AG04449 (cell line): ENCODE measurements at regions of chr11 and their contacts with region 1.

Region 1: DNA sequence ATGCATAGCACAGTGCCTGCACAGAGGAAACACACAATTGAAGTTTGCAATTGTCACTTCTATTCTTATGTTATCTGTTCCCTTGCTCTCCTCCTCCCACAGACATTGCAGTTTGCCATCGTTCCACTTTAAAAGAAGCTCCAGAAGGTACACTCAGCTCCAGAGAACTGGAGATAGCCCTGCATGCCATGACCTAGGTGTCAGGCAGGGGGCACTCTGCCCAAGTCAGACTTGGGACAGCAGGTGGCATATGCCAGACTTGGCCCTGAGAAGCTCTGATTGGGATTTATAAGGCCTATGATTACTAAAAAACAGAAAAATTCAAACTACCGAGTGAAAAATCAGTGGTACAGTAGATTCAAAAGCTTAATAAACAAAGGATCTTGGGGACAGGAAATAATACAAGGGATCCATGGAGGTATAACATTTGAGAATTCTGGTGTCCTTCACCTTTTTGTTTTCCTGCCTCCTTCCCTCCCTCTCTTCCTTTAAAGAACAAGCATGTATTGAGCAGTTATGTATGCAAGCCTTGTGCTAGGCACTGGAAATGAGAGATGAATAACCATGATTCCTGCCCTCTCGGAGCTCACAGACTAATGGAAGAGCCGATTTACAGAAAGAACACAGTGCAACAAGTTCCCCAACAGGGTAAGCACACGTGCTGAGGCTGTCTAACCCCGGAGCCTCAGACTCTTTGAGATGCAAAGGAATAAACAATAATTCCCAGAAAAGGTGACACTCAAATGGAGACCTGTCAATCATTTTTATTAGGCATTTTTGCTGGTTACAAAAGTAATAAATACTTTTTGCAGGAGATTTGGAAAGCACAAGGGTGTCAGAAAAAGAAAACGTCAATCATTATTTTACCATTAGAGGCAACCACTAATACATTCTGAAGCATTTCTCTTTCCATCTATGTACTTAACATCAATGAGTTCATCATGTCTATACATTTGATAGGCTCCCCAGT is 39.8 kb downstream of the TENM4 start:
- DNase-seq: no peak
- H3K4me3 ChIP-seq: no peak overlapping the region
- CTCF ChIP-seq: peak; percentile 76

Region 2: DNA sequence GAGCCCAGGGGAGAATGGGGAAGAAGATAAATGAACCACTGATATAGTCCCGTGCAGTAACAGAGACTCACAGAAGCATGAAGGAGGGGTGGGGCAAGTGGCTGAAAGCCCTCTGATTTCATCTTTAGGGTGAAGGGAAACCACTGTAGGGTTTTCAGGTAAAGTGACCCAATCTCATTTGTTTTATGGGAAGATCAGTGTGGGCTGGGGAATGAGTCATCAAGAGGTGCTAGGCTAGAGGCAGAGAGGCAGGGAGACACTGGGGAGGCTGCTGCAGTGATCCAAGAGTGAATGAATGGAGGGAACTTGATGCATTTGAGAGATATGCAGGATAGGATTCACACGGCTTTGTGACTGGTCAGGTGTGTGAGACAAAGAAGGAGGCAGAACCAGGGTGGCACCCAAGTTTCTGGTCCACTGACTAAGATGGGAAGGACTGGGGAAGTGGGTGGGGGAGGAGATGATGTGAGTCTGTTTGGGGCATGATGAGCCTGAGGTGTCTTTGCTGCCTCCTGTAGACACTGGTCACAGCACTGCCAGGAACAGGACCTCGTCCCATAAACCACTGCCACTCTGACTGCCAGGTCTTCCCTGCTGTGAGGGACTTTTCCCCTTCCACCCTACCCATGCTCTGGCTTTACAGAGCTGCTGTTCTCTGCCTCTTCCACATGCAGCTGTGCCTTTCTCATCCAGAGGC is 199.2 kb before region 1 on chr11:
- CTCF ChIA-PET with region 1: no interaction called
- POLR2A ChIA-PET with region 1: no interaction called
- DNase-seq: no peak
- H3K4me3 ChIP-seq: no peak overlapping the region
- CTCF ChIP-seq: no peak

Region 3: DNA sequence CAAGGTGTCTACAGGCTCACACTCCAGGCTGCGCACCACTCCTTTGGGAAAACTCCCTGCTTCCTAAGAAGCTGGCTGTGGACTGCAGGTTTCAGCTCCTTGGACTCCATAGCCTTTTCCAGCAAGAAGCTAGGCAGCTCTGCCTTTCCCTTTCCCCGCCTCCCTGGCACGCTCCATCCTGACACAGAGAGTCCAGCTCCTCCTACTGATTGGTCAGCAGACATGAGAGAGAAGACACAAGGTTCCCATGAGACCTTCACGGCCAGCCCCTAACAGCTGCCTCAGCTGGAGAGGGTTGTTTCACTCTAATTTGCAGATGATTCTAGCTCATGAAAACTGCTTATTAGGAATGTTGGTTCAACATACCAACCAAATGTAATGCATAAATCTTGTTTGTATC is 12.3 kb after region 1 on chr11:
- CTCF ChIA-PET with region 1: interaction called, 67 read pairs
- POLR2A ChIA-PET with region 1: interaction called, 5 read pairs
- DNase-seq: peak; percentile 84
- H3K4me3 ChIP-seq: no peak overlapping the region
- CTCF ChIP-seq: no peak

Region 4: GRCh38 chr11:79421820-79422219 is 20.8 kb after region 1 on chr11:
- CTCF ChIA-PET with region 1: interaction called, 13 read pairs
- POLR2A ChIA-PET with region 1: no interaction called
- DNase-seq: no peak
- H3K4me3 ChIP-seq: no peak overlapping the region
- CTCF ChIP-seq: no peak

Region 5: DNA sequence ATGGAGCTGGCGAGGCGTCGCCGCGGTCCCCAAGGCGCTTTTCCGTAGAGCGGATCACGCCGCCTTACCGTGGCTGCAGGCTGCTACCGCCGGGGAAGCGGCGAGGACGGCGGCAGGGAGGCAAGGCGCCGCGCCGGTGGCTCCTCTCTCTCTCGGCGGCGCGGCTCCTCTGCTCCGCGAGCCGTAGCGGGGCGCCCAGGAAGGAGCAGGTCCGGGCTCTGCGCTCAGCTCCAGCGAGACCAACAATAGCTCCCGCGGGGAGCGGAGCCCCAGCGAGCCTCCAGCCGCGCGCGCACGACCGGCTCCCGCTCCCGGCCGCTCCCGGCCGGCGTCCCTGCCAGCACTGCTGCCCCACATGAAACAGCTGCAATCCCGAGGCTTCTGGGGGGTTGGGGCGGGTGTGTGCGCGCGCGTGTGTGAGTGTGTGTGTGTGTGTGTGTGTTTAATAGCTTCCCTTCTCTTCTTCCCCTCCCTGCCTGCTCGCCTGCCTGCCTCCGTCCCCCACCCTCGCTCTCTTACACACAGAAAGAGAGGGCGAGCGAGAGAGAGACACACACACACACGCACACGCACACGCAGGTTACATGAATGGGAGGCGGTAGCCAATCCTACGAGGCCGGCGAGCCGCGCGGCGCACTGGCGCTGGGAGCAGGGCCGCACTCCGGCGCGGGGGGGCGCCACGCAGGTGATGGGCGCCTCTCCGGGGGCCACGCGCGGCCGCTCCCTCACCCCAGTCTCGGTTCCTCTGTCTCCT is 39.6 kb after region 1 on chr11 and contains the start of gene TENM4:
- CTCF ChIA-PET with region 1: interaction called, 10 read pairs
- POLR2A ChIA-PET with region 1: no interaction called
- DNase-seq: peak; percentile 40
- H3K4me3 ChIP-seq: peak within 1 kb of the TSS; percentile 70
- CTCF ChIP-seq: peak; percentile 21

Region 6: GRCh38 chr11:79466411-79466810 is 65.4 kb after region 1 on chr11:
- CTCF ChIA-PET with region 1: no interaction called
- POLR2A ChIA-PET with region 1: no interaction called
- DNase-seq: peak; percentile 52
- H3K4me3 ChIP-seq: no peak overlapping the region
- CTCF ChIP-seq: no peak

Region 7: DNA sequence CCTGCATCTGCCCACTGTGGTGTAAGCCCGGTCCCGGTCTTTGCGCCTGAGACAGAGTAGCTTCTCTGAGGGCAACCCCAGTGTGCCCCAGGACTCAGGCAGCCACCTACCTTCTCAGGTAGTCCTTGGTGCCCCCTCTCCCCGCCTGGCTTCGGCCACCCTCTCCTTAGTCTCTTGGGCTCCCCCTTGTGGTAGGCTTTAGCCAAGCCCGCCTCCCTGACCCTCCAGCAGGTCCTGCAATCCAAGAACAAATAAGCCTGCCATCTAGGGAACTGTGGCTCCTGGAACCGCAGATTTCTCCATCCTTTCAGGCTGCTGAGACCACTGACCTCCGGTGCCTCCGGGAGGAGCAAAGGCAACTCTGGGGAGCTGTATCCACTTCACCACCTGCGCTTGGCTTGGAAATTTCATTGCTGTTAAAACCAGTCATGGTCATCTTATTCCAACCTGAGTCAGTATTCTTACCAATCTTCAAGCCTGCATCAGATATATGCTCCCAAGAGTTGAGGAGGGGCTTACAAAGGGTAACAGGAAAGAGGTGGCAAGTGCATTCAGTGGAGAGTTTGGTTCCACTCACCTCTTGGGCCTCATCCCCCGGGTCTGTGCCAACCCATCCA is 92.7 kb after region 1 on chr11:
- CTCF ChIA-PET with region 1: interaction called, 25 read pairs
- POLR2A ChIA-PET with region 1: no interaction called
- DNase-seq: no peak
- H3K4me3 ChIP-seq: no peak overlapping the region
- CTCF ChIP-seq: peak; percentile 96